ENCODE measurements at regions of chr19 and their contacts with region 1.

Region 1: GRCh38 chr19:16612618-16613017 is 15.4 kb downstream of the MED26 start:
- DNase-seq: no peak
- H3K4me3 ChIP-seq: no peak overlapping the region
- H3K4me3 Mint-ChIP-seq: peak overlapping the region in 1 of 8 donors; percentile 20
- H3K27ac ChIP-seq: no peak overlapping the region
- H3K27ac Mint-ChIP-seq: peak overlapping the region in 4 of 7 donors; percentile 47 to 82 (median 64)
- H3K4me1 ChIP-seq: peaks cover 64% of the 10 kb centered on the region
- H3K4me1 Mint-ChIP-seq: peaks cover 43 to 81% (median 64%) of the 10 kb centered on the region in 4 donors
- H3K27me3 ChIP-seq: no peaks in the 10 kb centered on the region
- H3K27me3 Mint-ChIP-seq: no peaks in the 10 kb centered on the region

Region 2: DNA sequence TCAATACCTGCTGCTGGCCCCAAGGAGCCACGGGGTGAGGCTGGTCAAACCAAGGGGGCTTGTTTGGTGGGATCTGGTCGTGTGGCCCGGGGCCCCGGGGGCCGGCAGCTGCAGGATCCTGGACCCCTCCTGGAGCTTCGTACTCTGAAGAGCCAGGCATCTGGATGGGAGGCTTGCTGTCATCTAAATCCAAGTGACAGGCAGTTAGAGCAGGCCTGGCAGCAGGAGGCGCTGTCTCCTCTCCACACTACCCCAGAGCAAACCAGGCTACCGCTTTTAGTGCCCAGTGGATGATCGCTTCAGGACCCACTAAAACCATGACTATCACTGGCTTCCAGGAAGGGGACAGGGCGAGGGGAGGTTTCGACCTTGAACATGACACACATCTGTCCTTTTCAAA is 84.5 kb before region 1 on chr19:
- CTCF ChIA-PET with region 1: no interaction called
- POLR2A ChIA-PET with region 1: no interaction called
- intact Hi-C with region 1: loop called (anchors 1 kb)
- DNase-seq: peak in 4 of 5 donors; percentile 34 to 46 (median 40)
- H3K4me3 ChIP-seq: no peak overlapping the region
- H3K4me3 Mint-ChIP-seq: no peak overlapping the region
- H3K27ac ChIP-seq: no peak overlapping the region
- H3K27ac Mint-ChIP-seq: peak overlapping the region in 3 of 7 donors; percentile 42 to 70 (median 65)
- H3K4me1 ChIP-seq: no peaks in the 10 kb centered on the region
- H3K4me1 Mint-ChIP-seq: peaks cover 0 to 2% (median 0%) of the 10 kb centered on the region in 4 donors
- H3K27me3 ChIP-seq: no peaks in the 10 kb centered on the region
- H3K27me3 Mint-ChIP-seq: no peaks in the 10 kb centered on the region